IMR-90 (cell line): ENCODE measurements at regions of chr5 and their contacts with region 1.

Region 1: GRCh38 chr5:171342362-171343111 is 33.5 kb downstream of the TLX3 start:
- DNase-seq: peak; percentile 71
- ATAC-seq: peak; percentile 97
- H3K4me3 ChIP-seq: no peak overlapping the region
- H3K27ac ChIP-seq: no peak overlapping the region
- H3K4me1 ChIP-seq: no peaks in the 10 kb centered on the region
- H3K27me3 ChIP-seq: 0 out of 2 replicates have a peak, but pooled peaks cover 3% of the 10 kb centered on the region
- CTCF ChIP-seq: peak; percentile 78
- POLR2A ChIP-seq: no peak
- RAD21 ChIP-seq: peak; percentile 79

Region 2: DNA sequence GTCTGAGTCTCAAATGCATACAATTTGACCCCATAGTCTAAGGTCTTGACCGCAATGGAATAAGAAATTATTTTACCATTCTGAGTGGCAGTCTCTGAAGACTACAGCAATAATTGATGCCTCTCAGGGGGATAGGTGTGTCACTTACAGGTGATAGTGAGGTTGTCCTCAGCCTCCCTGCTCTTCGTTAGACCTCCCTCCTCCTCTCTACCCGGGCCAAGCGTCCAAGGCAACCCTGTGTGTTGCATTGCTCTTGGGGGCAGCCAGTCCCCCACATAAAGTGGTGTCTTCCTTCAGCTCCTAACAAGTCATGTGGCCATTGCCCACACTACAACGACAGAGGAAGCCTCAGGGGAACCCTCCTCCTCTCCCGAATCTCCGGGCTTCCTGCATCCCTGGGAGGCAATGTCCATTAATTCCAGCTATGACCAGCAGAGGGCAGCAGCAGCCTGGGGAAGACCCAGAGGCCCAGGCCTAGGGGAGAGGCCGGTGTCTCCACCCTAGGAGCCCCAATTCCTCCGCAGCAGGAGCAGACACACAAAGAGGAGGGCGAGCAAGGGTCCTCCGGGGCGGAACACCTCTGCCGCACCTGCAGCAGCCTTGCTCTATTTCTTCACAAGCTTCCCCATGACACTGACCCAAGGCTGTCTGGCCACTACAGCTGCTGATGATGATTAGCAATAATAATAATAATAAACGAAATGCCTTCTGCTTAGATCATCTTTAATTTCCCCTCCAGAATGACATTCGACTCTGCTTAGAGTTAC is 703.9 kb before region 1 on chr5:
- CTCF ChIA-PET with region 1: no interaction called
- POLR2A ChIA-PET with region 1: no interaction called
- dilution Hi-C with region 1: no loop called
- in situ Hi-C with region 1: no loop called
- intact Hi-C with region 1: loop called (anchors 5 kb)
- DNase-seq: peak; percentile 28
- ATAC-seq: peak; percentile 95
- H3K4me3 ChIP-seq: no peak overlapping the region
- H3K27ac ChIP-seq: no peak overlapping the region
- H3K4me1 ChIP-seq: peaks cover 4% of the 10 kb centered on the region; the same call in 1 of the 2 replicates
- H3K27me3 ChIP-seq: no peaks in the 10 kb centered on the region; the same call in 1 of the 2 replicates
- CTCF ChIP-seq: peak; percentile 72
- POLR2A ChIP-seq: no peak
- RAD21 ChIP-seq: peak; percentile 70

Region 3: GRCh38 chr5:170986598-170986997 is 355.9 kb before region 1 on chr5:
- CTCF ChIA-PET with region 1: no interaction called
- POLR2A ChIA-PET with region 1: no interaction called
- dilution Hi-C with region 1: no loop called
- in situ Hi-C with region 1: loop called (anchors 25 kb)
- intact Hi-C with region 1: loop called (anchors 2 kb)
- DNase-seq: peak; percentile 42
- ATAC-seq: peak; percentile 51; the same call in 1 of the 2 replicates
- H3K4me3 ChIP-seq: no peak overlapping the region
- H3K27ac ChIP-seq: no peak overlapping the region
- H3K4me1 ChIP-seq: no peaks in the 10 kb centered on the region
- H3K27me3 ChIP-seq: no peaks in the 10 kb centered on the region
- CTCF ChIP-seq: peak; percentile 45
- POLR2A ChIP-seq: no peak
- RAD21 ChIP-seq: peak; percentile 51

Region 4: GRCh38 chr5:171127314-171127713 is 215.2 kb before region 1 on chr5:
- CTCF ChIA-PET with region 1: no interaction called
- POLR2A ChIA-PET with region 1: no interaction called
- dilution Hi-C with region 1: no loop called
- in situ Hi-C with region 1: no loop called
- intact Hi-C with region 1: no loop called
- DNase-seq: peak; percentile 57
- ATAC-seq: peak; percentile 72
- H3K4me3 ChIP-seq: no peak overlapping the region
- H3K27ac ChIP-seq: no peak overlapping the region
- H3K4me1 ChIP-seq: no peaks in the 10 kb centered on the region
- H3K27me3 ChIP-seq: no peaks in the 10 kb centered on the region
- CTCF ChIP-seq: no peak
- POLR2A ChIP-seq: no peak
- RAD21 ChIP-seq: no peak

Region 5: DNA sequence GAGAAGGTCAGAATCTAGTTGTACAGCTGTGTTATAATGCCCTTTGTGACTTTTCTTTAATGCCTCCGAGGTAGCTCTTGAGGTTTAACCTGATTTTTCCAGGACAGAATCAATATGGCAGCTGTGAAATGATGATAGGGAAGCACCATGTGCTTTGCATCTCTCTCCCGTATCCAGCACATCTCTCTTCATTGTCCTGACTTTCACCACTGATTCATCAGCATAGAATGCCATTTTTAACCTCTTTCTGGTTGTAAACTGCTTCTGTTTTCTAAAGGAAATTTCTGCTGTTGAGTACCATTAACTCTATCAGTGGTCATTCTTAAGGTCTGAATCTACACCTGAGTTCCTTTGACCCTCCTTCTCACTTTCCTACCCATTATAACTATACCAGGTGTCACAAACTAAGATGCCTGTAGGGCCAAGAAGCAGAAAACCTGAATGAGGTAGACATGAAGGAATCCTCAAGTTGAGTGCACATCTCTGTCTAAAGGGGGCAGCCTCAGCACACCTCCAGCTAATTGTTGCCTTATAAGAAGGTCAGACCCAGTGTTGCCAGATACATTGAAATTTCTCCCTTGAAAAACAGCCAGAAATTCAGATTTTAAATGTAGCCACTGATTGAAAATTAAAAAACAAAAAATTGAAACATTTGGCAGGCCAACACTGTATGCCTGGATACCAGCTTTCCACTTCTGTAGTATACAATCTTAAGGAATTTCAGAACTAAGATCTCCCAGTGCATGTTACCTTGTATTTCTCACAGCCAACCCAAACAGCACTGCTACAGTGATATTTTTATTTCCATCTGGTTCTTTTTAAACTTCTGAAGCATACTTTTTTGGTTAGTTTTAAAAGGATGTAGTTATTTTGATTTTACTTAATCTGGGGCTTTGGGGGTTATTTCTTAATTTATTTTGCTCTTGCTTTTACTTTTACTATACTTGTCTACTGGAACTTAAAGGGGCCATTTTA is 69.3 kb before region 1 on chr5:
- CTCF ChIA-PET with region 1: interaction called, 4 read pairs
- POLR2A ChIA-PET with region 1: no interaction called
- dilution Hi-C with region 1: no loop called
- in situ Hi-C with region 1: no loop called
- intact Hi-C with region 1: loop called (anchors 2 kb)
- DNase-seq: peak; percentile 40
- ATAC-seq: peak; percentile 15; the same call in 1 of the 2 replicates
- H3K4me3 ChIP-seq: no peak overlapping the region
- H3K27ac ChIP-seq: no peak overlapping the region
- H3K4me1 ChIP-seq: peaks cover 12% of the 10 kb centered on the region
- H3K27me3 ChIP-seq: no peaks in the 10 kb centered on the region
- CTCF ChIP-seq: peak; percentile 50
- POLR2A ChIP-seq: no peak
- RAD21 ChIP-seq: peak; percentile 49